Left cardiac atrium (tissue), 4 donors: ENCODE measurements at regions of chr4 and their contacts with region 1.

Region 1: DNA sequence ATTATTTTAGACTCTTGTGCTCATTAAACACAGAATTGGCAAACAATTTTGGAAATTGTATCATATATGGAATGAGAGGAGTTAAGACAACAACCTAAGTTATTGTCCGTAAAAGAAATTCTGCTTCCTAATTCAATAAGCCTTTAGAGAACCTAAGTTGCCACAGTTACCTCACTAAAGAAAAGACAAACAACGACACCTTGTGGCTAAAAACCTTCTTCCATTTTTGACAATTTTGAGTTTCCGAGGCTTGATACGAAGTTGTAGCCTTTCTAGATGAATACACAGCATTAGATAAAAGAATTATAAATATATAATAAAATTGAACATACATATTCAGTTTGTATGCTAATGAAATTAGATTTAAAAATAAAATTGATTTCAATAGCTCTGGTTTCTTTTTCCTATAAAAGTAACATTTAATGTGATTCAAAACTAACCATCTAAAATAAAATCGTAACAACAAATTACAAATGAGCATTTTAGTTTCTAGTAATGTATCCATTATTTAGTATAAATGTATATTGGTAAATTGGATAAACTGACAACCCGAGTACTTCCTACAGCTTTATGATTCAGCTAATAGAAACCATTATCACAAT is 275.1 kb downstream of the GPM6A start:
- DNase-seq: no peak
- ATAC-seq: no peak

Region 2: DNA sequence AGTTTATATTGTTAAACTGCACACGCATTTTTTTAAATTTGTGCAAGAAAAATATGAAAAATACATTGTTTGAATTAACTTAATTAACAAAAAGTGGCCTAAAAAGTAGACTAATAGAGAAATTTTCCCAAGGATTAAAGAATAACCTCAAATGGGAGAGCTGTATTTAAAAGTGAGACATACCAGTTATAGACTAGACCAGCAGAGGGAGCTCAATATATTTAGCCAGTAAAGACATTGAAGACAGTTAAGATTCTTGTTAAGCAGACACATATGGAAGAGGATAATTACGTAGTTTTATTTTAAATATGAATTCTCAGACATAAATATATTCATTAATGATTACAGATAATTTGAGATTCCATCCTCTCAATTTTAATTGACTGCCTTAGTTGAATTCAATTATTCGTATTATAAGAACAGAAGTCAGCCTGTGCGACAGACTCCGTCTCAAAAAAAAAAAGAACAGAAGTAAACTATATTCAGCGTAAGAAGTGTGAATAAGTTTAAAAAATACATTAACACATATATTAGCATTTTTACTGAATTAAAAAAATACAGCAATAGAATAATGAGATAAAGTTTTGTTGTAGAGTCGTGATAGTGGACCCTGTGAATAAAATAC is 772.7 kb before region 1 on chr4:
- intact Hi-C with region 1: loop called in 1 of 2 experiments (anchors 5 kb)
- DNase-seq: no peak
- ATAC-seq: no peak

Region 3: GRCh38 chr4:175622887-175623286 is 85.9 kb after region 1 on chr4:
- intact Hi-C with region 1: no loop called
- DNase-seq: no peak
- ATAC-seq: no peak